Naive thymus-derived CD4-positive, alpha-beta T cell (primary cell): ENCODE measurements at regions of chr2 and their contacts with region 1.

Region 1: DNA sequence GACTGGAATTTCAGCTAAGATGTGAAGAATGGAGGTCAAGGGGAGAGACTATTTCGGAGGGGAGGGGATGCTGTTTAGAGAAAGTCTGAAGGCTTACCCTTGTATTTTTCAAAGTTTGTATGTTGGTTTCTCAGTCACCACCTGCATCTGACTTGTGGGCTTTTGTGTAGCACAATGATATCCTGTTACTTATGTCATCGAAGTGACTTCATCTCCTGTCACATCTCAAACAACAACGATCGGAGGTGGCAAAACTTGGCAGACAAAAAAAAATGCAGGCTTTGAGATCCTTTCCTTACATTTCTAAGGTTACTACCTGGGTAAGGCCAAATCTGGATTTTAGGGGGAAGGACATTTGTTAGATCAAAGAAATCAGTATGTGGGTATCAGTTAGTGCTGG is 11.7 kb upstream of the CXCR4 start:
- DNase-seq: peak in 7 of 9 donors; percentile 80 to 92 (median 88)
- ATAC-seq: peak; percentile 60
- H3K4me3 ChIP-seq: peak overlapping the region; percentile 36
- H3K4me3 Mint-ChIP-seq: peak overlapping the region; percentile 72 to 92 (median 81)
- H3K27ac ChIP-seq: peak overlapping the region; percentile 99
- H3K27ac Mint-ChIP-seq: peak overlapping the region; percentile 94 to 100 (median 99)
- H3K4me1 ChIP-seq: peaks cover 89 to 91% of the 10 kb centered on the region in 2 donors
- H3K4me1 Mint-ChIP-seq: peaks cover 65 to 100% (median 98%) of the 10 kb centered on the region in 7 donors
- H3K27me3 ChIP-seq: no peaks in the 10 kb centered on the region
- H3K27me3 Mint-ChIP-seq: peaks cover 0 to 51% (median 0%) of the 10 kb centered on the region in 5 donors

Region 2: DNA sequence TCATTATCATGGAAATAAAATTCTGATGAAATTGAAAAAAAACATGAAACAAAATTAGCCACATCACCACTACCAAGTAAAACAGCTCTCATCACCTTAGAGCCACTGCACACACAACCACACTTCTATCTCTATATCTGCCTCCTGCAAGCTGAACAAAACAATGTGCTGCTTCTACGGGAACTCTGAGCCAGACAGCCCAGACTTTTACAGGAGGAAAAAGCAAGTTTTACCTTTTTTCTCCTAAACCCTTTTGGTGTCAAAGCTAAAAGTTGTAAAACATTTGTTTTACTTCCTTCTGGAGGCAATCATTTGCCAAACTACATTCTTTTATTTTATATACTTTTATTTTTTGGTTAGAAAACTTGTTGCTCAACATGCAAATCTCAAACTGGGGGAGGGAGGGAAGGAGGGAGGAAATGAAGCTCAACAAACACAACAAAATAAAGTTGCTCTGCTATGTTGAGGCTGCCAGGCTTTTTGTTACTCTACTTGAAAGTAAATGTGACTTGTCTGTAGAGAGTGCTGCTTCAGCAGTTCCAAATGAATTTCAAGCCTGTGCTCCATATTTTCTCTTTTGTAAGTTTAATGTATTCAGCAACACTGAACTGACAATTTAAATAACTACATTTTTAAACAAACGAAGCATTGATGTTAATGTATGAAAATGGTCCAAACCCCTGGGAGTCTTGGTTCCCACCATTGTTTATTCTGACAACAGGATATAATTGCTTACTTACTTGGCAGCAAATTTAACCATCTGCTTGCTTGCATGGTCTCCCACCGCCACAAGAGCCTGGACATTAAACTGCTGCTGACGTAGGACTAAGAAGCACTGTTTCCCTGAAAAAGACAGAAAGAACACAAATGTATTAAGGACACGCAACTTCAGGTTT is 168.7 kb before region 1 on chr2:
- CTCF ChIA-PET with region 1: no interaction called
- POLR2A ChIA-PET with region 1: no interaction called
- intact Hi-C with region 1: loop called in 1 of 2 experiments (anchors 1 kb)
- DNase-seq: peak in 6 of 9 donors; percentile 3 to 44 (median 26)
- ATAC-seq: peak; percentile 76
- H3K4me3 ChIP-seq: no peak overlapping the region
- H3K4me3 Mint-ChIP-seq: peak overlapping the region in 9 of 10 donors; percentile 3 to 79 (median 37)
- H3K27ac ChIP-seq: peak overlapping the region; percentile 40
- H3K27ac Mint-ChIP-seq: peak overlapping the region; percentile 51 to 93 (median 83)
- H3K4me1 ChIP-seq: peaks cover 18 to 26% of the 10 kb centered on the region in 2 donors
- H3K4me1 Mint-ChIP-seq: peaks cover 37 to 67% (median 60%) of the 10 kb centered on the region in 7 donors
- H3K27me3 ChIP-seq: no peaks in the 10 kb centered on the region
- H3K27me3 Mint-ChIP-seq: no peaks in the 10 kb centered on the region

Region 3: DNA sequence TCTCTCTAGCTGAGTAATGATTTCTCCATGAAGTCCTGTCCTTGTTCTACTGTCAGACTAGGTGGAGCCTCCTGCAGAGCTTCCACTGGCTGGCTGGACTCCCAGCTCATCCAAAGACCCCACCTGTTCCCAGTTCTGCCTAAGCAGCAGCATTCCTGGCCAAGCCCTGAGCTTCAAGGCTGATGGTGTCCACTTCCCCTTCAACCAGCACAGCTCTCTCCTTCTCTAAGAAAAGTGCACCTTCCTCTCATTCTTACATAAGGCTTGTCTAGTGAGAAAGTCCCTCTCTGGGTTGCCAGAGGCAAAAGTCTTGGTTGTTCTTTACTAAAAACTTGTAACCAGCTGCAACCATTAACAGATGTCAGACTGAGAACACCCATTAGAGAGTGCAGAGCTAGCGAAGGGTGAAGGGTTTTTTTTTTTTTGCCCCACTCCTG is 70.5 kb before region 1 on chr2:
- CTCF ChIA-PET with region 1: no interaction called
- POLR2A ChIA-PET with region 1: interaction called, 9 read pairs
- intact Hi-C with region 1: loop called in 1 of 2 experiments (anchors 1 kb)
- DNase-seq: no peak
- ATAC-seq: no peak
- H3K4me3 ChIP-seq: no peak overlapping the region
- H3K4me3 Mint-ChIP-seq: peak overlapping the region in 2 of 10 donors; percentile 43 to 50
- H3K27ac ChIP-seq: no peak overlapping the region
- H3K27ac Mint-ChIP-seq: peak overlapping the region in 5 of 9 donors; percentile 16 to 90 (median 65)
- H3K4me1 ChIP-seq: peaks cover 43 to 44% of the 10 kb centered on the region in 2 donors
- H3K4me1 Mint-ChIP-seq: peaks cover 46 to 90% (median 80%) of the 10 kb centered on the region in 7 donors
- H3K27me3 ChIP-seq: no peaks in the 10 kb centered on the region
- H3K27me3 Mint-ChIP-seq: no peaks in the 10 kb centered on the region

Region 4: GRCh38 chr2:136141510-136142149 is 12.0 kb after region 1 on chr2:
- CTCF ChIA-PET with region 1: interaction called, 8 read pairs
- POLR2A ChIA-PET with region 1: interaction called, 178 read pairs
- intact Hi-C with region 1: loop called (anchors 1 kb)
- DNase-seq: no peak
- ATAC-seq: no peak
- H3K4me3 ChIP-seq: no peak overlapping the region
- H3K4me3 Mint-ChIP-seq: peak overlapping the region in 9 of 10 donors; percentile 18 to 78 (median 63)
- H3K27ac ChIP-seq: peak overlapping the region; percentile 99
- H3K27ac Mint-ChIP-seq: peak overlapping the region in 8 of 9 donors; percentile 66 to 100 (median 99)
- H3K4me1 ChIP-seq: peaks cover 38 to 57% of the 10 kb centered on the region in 2 donors
- H3K4me1 Mint-ChIP-seq: peaks cover 37 to 85% (median 70%) of the 10 kb centered on the region in 7 donors
- H3K27me3 ChIP-seq: no peaks in the 10 kb centered on the region
- H3K27me3 Mint-ChIP-seq: peaks cover 0 to 82% (median 0%) of the 10 kb centered on the region in 5 donors

Region 5: DNA sequence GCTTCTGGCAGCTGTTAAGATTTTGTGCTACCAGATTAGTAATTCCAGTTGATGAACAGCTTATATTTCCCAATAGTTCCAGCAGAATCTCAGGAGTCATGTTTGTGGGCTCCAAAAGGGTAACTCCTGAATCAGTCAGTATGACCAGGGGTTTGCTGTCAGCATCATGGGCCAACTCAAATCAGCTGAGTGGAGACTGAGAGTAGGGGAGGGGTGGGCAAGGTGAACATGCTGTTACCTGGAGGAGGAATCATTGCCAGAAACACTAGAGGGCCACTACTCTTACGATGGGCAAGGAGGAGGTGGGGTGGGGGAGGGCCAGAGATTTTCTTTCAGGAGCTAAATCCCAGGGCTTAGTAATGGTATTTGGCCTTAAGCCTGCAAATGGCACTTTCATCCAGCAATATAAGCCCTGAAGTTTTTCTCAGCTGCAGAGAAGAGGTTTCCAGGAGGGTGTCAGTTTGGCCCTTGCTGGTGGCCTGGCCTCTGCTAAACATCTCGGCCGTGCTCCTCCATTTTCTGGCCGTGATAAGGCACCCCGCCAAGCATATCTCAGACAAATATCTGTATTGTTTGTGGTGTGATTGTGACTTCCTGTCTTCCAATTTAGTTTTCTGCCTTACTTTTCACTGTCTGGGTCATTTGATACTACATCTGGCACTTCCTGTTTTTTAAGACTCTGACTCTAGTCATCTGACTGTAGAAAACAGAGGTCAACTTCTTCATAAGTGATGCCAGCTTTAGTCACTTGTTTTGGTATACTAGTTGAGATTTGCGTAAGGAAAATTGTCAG is 108.9 kb after region 1 on chr2:
- CTCF ChIA-PET with region 1: interaction called, 4 read pairs
- POLR2A ChIA-PET with region 1: interaction called, 53 read pairs
- intact Hi-C with region 1: loop called (anchors 1 to 2 kb)
- DNase-seq: peak in 8 of 9 donors; percentile 33 to 75 (median 60)
- ATAC-seq: peak; percentile 84
- H3K4me3 ChIP-seq: no peak overlapping the region
- H3K4me3 Mint-ChIP-seq: peak overlapping the region; percentile 26 to 64 (median 48)
- H3K27ac ChIP-seq: peak overlapping the region; percentile 25
- H3K27ac Mint-ChIP-seq: peak overlapping the region; percentile 84 to 95 (median 90)
- H3K4me1 ChIP-seq: peaks cover 31 to 36% of the 10 kb centered on the region in 2 donors
- H3K4me1 Mint-ChIP-seq: peaks cover 32 to 60% (median 54%) of the 10 kb centered on the region in 7 donors
- H3K27me3 ChIP-seq: no peaks in the 10 kb centered on the region
- H3K27me3 Mint-ChIP-seq: no peaks in the 10 kb centered on the region

Region 6: GRCh38 chr2:136613096-136613495 is 483.5 kb after region 1 on chr2:
- CTCF ChIA-PET with region 1: no interaction called
- POLR2A ChIA-PET with region 1: no interaction called
- intact Hi-C with region 1: no loop called
- DNase-seq: no peak
- ATAC-seq: no peak
- H3K4me3 ChIP-seq: no peak overlapping the region
- H3K4me3 Mint-ChIP-seq: no peak overlapping the region
- H3K27ac ChIP-seq: no peak overlapping the region
- H3K27ac Mint-ChIP-seq: no peak overlapping the region
- H3K4me1 ChIP-seq: no peaks in the 10 kb centered on the region
- H3K4me1 Mint-ChIP-seq: peaks cover 0 to 1% (median 0%) of the 10 kb centered on the region in 7 donors
- H3K27me3 ChIP-seq: no peaks in the 10 kb centered on the region
- H3K27me3 Mint-ChIP-seq: peaks cover 0 to 17% (median 4%) of the 10 kb centered on the region in 5 donors